Thyroid gland (tissue), 4 donors: ENCODE measurements at regions of chr2 and their contacts with region 1.

Region 1: GRCh38 chr2:46062637-46063412 is 234.4 kb upstream of the EPAS1 start:
- DNase-seq: peak; percentile 80 to 84
- H3K4me3 ChIP-seq: no peak overlapping the region
- H3K27ac ChIP-seq: peak overlapping the region in 1 of 3 donors; percentile 44
- H3K4me1 ChIP-seq: peaks cover 10 to 11% of the 10 kb centered on the region in 2 donors
- H3K27me3 ChIP-seq: no peaks in the 10 kb centered on the region
- CTCF ChIP-seq: peak; percentile 65 to 90 (median 80)
- POLR2A ChIP-seq: no peak

Region 2: GRCh38 chr2:46296840-46297545 is 234.2 kb after region 1 on chr2 and contains the start of gene EPAS1:
- intact Hi-C with region 1: loop called (anchors 5 kb)
- DNase-seq: peak; percentile 93 to 94
- H3K4me3 ChIP-seq: peak within 1 kb of the TSS; percentile 34 to 95 (median 63)
- H3K27ac ChIP-seq: peak within 1 kb of the TSS; percentile 97 to 98 (median 98)
- H3K4me1 ChIP-seq: peaks cover 12 to 13% of the 10 kb centered on the region in 2 donors
- H3K27me3 ChIP-seq: no peaks in the 10 kb centered on the region
- CTCF ChIP-seq: peak in 1 of 6 experiments; percentile 1
- POLR2A ChIP-seq: peak; percentile 80 to 96
- total RNA-seq, gene EPAS1: 124 to 563 (median 182) TPM

Region 3: GRCh38 chr2:46887028-46887885 is 824.4 kb after region 1 on chr2:
- intact Hi-C with region 1: no loop called
- DNase-seq: no peak
- H3K4me3 ChIP-seq: no peak overlapping the region
- H3K27ac ChIP-seq: no peak overlapping the region
- H3K4me1 ChIP-seq: peaks cover 0 to 6% of the 10 kb centered on the region in 2 donors
- H3K27me3 ChIP-seq: no peaks in the 10 kb centered on the region
- CTCF ChIP-seq: no peak
- POLR2A ChIP-seq: no peak